Activated CD4-positive, alpha-beta memory T cell treated with anti-CD3 and anti-CD28 coated beads, Interleukin-2, amount 10 ng/mL, durations not matched to agents 7 days and 5 days (primary cell): ENCODE measurements at regions of chr11 and their contacts with region 1.

Region 1: GRCh38 chr11:60887556-60887955 is 18.8 kb downstream of the PRPF19 start:
- DNase-seq: peak; percentile 55
- H3K4me3 Mint-ChIP-seq: no peak overlapping the region
- H3K27ac Mint-ChIP-seq: no peak overlapping the region
- H3K4me1 Mint-ChIP-seq: peaks cover 9% of the 10 kb centered on the region
- H3K27me3 Mint-ChIP-seq: no peaks in the 10 kb centered on the region

Region 2: GRCh38 chr11:60389279-60389910 is 498.2 kb before region 1 on chr11:
- CTCF ChIA-PET with region 1: no interaction called
- POLR2A ChIA-PET with region 1: no interaction called
- DNase-seq: no peak
- H3K4me3 Mint-ChIP-seq: no peak overlapping the region
- H3K27ac Mint-ChIP-seq: no peak overlapping the region
- H3K4me1 Mint-ChIP-seq: no peaks in the 10 kb centered on the region
- H3K27me3 Mint-ChIP-seq: peaks cover 4% of the 10 kb centered on the region

Region 3: GRCh38 chr11:60775420-60775961 is 112.1 kb before region 1 on chr11:
- CTCF ChIA-PET with region 1: interaction called, 18 read pairs
- POLR2A ChIA-PET with region 1: no interaction called
- DNase-seq: peak; percentile 82
- H3K4me3 Mint-ChIP-seq: no peak overlapping the region
- H3K27ac Mint-ChIP-seq: no peak overlapping the region
- H3K4me1 Mint-ChIP-seq: peaks cover 4% of the 10 kb centered on the region
- H3K27me3 Mint-ChIP-seq: peaks cover 10% of the 10 kb centered on the region

Region 4: GRCh38 chr11:60841797-60842667 is 45.5 kb before region 1 on chr11 and contains the start of gene CCDC86:
- CTCF ChIA-PET with region 1: interaction called, 45 read pairs
- POLR2A ChIA-PET with region 1: interaction called, 3 read pairs
- DNase-seq: peak; percentile 98
- H3K4me3 Mint-ChIP-seq: peak within 1 kb of the TSS; percentile 79
- H3K27ac Mint-ChIP-seq: peak within 1 kb of the TSS; percentile 86
- H3K4me1 Mint-ChIP-seq: peaks cover 62% of the 10 kb centered on the region
- H3K27me3 Mint-ChIP-seq: no peaks in the 10 kb centered on the region
- total RNA-seq, gene CCDC86: 15.3 to 16.5 TPM

Region 5: DNA sequence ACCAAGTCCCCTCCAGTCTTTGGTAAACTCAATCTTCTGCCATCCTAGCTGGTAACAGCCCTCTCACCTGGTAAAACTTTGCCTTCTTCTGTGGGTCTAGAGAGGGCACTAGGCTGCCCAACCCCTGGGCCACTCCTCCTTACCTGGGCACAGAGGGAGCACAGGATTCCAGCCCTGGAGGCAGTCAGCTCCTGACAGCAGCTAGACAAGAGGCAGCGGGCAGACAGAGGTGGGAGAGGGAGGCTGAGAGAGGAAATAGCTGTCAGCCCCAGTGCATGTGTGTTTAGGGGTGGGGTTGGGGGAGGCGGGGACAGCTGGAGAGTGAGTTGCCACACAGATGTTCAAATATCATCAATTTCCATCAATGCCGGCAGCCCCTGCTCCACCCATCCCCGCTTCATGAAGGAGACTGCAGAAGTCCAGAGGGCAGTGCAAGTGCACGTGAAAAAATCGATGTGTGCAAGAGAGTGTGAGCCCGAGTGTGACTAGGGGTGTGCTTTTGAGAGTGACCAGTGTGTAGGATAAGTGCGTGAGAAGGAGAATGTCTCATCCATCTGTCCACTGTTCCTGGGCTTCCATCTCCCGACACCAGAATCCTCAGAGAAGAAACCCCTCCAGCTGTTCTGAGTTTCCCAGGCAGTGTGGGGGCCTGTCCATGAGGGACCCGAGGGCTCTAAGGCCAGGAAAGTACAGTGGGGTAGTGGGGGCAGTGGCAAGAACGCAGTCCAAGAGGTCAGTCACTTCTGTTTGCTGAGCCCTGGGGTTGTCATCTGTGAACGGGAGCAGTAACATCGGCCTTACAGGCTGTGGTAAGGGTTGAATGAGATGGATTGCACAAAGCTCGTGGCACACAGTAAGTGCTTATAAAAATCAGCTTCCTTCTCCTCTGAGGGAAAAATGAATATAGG is 31.6 kb before region 1 on chr11 and contains the start of gene PTGDR2:
- CTCF ChIA-PET with region 1: interaction called, 15 read pairs
- POLR2A ChIA-PET with region 1: no interaction called
- DNase-seq: no peak
- H3K4me3 Mint-ChIP-seq: peak within 1 kb of the TSS; percentile 42
- H3K27ac Mint-ChIP-seq: no peak within 1 kb of the TSS
- H3K4me1 Mint-ChIP-seq: peaks cover 32% of the 10 kb centered on the region
- H3K27me3 Mint-ChIP-seq: no peaks in the 10 kb centered on the region
- total RNA-seq, gene PTGDR2: 5.7 TPM

Region 6: DNA sequence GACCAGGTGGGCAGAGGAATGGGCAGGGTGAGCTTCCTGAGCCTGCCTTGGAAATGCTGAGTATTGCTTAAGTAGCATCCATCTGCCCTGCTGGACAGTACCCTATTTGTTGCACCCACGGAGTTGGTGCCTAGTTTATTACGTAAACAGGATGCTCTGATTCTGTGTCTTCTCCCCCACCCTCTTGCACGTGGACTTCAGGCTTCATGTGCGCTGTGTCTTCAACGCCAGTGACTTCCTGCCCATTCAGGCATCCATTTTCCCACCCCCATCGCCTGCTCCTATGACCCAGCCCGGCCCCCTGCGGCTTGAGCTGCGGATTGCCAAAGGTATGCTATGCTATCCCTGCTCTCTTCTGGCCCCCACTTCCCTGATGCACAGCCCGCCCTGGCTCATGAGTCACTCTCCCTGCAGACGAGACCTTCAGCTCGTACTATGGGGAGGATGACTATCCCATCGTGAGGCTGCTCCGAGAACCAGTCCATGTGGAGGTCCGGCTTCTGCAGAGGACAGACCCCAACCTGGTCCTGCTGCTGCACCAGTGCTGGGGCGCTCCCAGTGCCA is 14.5 kb before region 1 on chr11:
- CTCF ChIA-PET with region 1: interaction called, 16 read pairs
- POLR2A ChIA-PET with region 1: interaction called, 5 read pairs
- DNase-seq: no peak
- H3K4me3 Mint-ChIP-seq: no peak overlapping the region
- H3K27ac Mint-ChIP-seq: no peak overlapping the region
- H3K4me1 Mint-ChIP-seq: peaks cover 61% of the 10 kb centered on the region
- H3K27me3 Mint-ChIP-seq: no peaks in the 10 kb centered on the region

Region 7: DNA sequence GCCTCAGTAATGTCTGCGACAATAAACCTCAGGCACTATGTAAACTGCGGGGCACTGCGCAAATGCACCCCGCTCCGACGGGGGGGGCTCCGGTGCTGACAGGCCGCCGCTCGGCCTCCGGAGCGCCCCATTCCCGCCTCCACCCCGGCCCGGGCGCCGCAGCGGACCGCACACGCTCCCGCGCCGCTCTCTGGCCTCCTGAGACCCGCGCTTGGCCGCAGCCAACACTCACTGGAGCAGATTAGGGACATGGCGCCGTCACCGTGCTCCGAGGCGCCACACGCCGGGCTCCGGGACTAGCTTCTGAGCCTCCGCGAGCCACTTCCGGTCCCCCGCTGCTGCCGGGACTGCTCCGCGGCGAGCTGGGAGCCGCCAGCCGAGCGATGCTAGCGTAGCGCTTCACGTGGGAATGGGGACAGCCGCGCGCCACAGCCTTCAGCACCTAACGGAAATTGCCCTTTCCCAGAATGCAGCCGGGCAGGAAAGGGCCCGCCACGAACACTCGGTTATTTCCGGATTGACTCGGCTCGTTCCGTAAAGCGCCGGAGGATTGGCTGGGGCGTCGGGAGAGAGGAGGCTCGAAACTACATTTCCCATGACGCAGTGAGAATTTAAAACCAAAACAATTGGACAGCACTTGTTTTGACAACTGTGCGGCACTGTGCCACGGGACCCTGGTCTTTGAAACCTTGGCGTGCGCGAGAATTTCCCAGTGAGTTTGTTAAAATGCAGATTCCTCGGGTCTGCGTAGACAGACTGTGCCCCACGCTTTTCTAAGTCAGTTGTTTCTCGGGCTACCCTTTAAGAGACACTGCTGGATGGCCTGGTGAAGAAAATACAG is 18.8 kb after region 1 on chr11 and contains the start of gene PRPF19:
- CTCF ChIA-PET with region 1: interaction called, 14 read pairs
- POLR2A ChIA-PET with region 1: interaction called, 6 read pairs
- DNase-seq: peak; percentile 99
- H3K4me3 Mint-ChIP-seq: peak within 1 kb of the TSS; percentile 83
- H3K27ac Mint-ChIP-seq: peak within 1 kb of the TSS; percentile 88
- H3K4me1 Mint-ChIP-seq: peaks cover 40% of the 10 kb centered on the region
- H3K27me3 Mint-ChIP-seq: peaks cover 16% of the 10 kb centered on the region
- total RNA-seq, gene PRPF19: 99.2 to 103 TPM